ENCODE measurements at regions of chr4 and their contacts with region 1.

Region 1: DNA sequence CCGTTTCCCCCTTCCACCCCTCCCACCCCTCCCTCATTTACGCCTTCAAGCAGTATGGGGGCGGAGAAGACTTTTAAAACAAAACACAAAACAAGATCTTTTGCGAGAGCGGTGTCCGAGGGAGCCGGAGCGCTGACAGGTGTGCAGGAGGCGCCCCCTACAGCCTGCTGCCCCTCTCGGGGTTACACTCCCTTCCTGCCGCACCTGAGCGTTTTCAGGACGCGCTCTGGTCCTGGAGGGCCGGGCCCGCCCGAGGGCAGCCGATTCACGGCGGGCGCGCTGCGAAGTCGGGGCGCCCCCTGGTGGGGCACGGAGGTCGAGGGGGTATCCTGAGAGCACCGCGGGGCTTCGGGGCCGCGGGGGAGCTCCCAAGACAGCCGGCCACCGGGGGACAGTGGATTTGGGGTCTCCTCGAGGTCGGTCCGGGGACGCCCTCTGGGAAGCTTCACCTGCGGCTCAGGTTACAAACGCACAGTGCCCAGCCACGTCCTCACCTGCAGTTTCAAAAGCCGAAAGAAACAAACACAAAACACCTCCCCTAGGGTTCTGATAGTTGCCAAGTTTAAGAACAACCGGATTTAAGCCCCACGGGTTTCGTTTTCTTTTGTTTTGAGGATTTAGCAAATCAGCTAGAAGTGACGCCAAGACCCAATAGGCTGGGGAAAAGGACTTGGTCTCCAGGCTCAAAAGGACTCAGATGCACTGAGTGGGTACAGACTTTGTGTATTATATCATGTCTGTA is 8.0 kb upstream of the NEUROG2 start:
- DNase-seq: no peak
- ATAC-seq: peak; percentile 96
- H3K4me3 ChIP-seq: peak overlapping the region; percentile 73; the same call in 1 of the 2 replicates
- H3K27ac ChIP-seq: no peak overlapping the region
- H3K4me1 ChIP-seq: peaks cover 3% of the 10 kb centered on the region
- H3K27me3 ChIP-seq: no peaks in the 10 kb centered on the region; a peak in 2 of 4 replicates
- CTCF ChIP-seq: peak; percentile 88 to 92 (median 90)
- EP300 ChIP-seq: no peak
- POLR2A ChIP-seq: no peak
- RAD21 ChIP-seq: peak; percentile 85

Region 2: DNA sequence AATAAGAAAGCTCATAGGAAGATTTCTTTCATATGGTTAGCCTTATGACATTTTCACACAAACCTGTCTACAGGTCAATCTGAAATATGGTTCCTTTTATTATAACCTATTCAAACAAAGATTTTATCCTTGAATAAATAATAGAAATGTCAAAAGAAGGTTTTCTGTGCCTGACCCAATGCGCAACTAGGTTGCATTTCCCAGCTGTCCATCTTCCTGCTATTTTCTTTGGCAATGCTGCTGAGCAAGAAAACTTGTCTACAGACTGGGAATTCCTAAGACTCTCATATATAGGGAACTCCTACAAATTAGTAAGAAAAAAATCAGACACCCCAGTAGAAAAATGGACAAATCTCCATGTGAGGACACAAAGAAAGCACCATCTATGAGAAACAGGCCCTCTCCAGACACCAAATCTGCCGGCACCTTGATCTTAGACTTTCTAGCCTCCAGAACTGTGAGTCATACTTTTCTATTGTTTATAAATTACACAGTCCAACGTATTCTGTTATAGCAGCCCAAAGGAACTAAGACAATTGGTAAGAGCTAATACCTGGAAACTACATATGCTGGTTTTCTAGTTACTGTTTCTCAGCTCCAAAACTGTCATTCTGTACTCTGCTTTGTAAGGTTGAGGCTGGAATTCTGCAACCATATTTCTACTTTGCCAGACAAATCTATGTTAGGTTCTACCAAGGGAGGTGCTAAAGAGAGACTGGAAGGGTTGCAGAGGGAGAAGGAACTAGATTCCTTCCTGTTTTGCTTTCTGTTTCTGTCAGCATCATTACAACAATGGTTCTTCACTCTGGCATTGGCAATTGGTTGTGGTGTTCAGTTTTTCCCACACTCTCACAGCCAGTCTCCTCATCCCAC is 414.5 kb before region 1 on chr4:
- CTCF ChIA-PET with region 1: interaction called, 91 read pairs
- POLR2A ChIA-PET with region 1: no interaction called
- RAD21 ChIA-PET with region 1: no interaction called
- SMC1A ChIA-PET with region 1: interaction called, 13 read pairs
- in situ Hi-C with region 1: loop called (anchors 5 kb)
- intact Hi-C with region 1: no loop called
- DNase-seq: peak; percentile 13
- ATAC-seq: peak; percentile 71
- H3K4me3 ChIP-seq: no peak overlapping the region
- H3K27ac ChIP-seq: no peak overlapping the region
- H3K4me1 ChIP-seq: no peaks in the 10 kb centered on the region
- H3K27me3 ChIP-seq: no peaks in the 10 kb centered on the region
- CTCF ChIP-seq: no peak
- EP300 ChIP-seq: no peak
- POLR2A ChIP-seq: no peak
- RAD21 ChIP-seq: no peak

Region 3: DNA sequence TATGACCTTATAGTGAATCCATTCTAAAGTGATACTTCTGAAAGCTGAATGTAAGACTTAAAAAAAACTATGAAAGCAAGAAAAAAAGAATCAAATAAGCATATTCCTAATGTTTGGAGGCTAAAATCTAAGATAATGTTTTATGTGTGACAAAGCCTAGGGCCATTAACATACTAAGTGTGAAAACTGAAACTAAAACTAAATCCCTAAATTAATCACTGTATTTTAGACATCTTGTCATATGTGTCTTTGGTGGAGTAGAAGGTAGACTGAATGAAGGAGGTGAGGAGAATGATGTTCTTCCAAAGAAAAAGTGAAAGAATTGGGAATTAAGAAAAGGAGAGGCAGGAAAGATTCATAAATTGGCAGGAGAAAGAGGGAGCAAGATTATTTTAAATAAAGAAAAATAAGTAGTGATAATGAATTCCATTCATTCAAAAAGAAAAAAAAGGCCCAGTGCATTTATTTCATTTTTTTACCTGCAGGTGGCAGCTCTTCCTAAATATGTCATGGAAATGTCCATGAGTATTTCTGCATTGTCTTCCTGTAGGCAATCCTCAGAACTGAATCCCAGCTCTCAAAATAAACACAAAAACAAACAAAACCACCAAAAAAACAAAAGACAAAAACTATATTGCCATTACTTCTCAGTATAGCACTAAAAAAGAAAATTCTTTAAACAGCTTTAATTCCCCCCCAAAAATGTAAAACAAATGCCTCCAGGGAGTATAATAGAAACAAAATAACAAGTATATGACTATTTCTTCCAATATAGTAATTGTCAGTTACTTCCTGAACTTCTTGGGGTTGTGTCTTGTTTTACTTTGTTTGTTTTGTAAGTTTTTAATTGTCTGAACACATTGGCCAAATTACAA is 309.3 kb before region 1 on chr4:
- CTCF ChIA-PET with region 1: interaction called, 17 read pairs
- POLR2A ChIA-PET with region 1: no interaction called
- RAD21 ChIA-PET with region 1: interaction called, 8 read pairs
- SMC1A ChIA-PET with region 1: interaction called, 7 read pairs
- in situ Hi-C with region 1: no loop called
- intact Hi-C with region 1: loop called (anchors 5 kb)
- DNase-seq: no peak
- ATAC-seq: peak; percentile 63; the same call in 2 of the 3 replicates
- H3K4me3 ChIP-seq: no peak overlapping the region
- H3K27ac ChIP-seq: no peak overlapping the region
- H3K4me1 ChIP-seq: no peaks in the 10 kb centered on the region
- H3K27me3 ChIP-seq: no peaks in the 10 kb centered on the region
- CTCF ChIP-seq: peak in 2 of 3 experiments; percentile 20 to 49; a peak in 4 of 6 replicates
- EP300 ChIP-seq: no peak
- POLR2A ChIP-seq: no peak
- RAD21 ChIP-seq: peak; percentile 46; the same call in 1 of the 2 replicates

Region 4: GRCh38 chr4:112604589-112604988 is 80.7 kb after region 1 on chr4:
- CTCF ChIA-PET with region 1: interaction called, 17 read pairs
- POLR2A ChIA-PET with region 1: no interaction called
- RAD21 ChIA-PET with region 1: interaction called, 20 read pairs
- SMC1A ChIA-PET with region 1: interaction called, 13 read pairs
- in situ Hi-C with region 1: no loop called
- intact Hi-C with region 1: loop called (anchors 1 kb)
- DNase-seq: peak; percentile 3
- ATAC-seq: peak; percentile 92
- H3K4me3 ChIP-seq: no peak overlapping the region
- H3K27ac ChIP-seq: no peak overlapping the region
- H3K4me1 ChIP-seq: no peaks in the 10 kb centered on the region
- H3K27me3 ChIP-seq: no peaks in the 10 kb centered on the region
- CTCF ChIP-seq: peak; percentile 56 to 73 (median 65)
- EP300 ChIP-seq: no peak
- POLR2A ChIP-seq: no peak
- RAD21 ChIP-seq: peak; percentile 79

Measured in GM12878 (cell line).